ENCODE measurements at regions of chr19 and their contacts with region 1.

Region 1: GRCh38 chr19:10864538-10864899 is 6.8 kb upstream of the CARM1 start:
- DNase-seq: peak; percentile 90
- ATAC-seq: peak; percentile 89
- H3K4me3 Mint-ChIP-seq: no peak overlapping the region
- H3K27ac Mint-ChIP-seq: no peak overlapping the region
- H3K4me1 Mint-ChIP-seq: peaks cover 12% of the 10 kb centered on the region
- H3K27me3 Mint-ChIP-seq: no peaks in the 10 kb centered on the region
- CTCF ChIP-seq: peak; percentile 97

Region 2: GRCh38 chr19:10717356-10718204 is 146.9 kb before region 1 on chr19 and contains the start of gene DNM2:
- CTCF ChIA-PET with region 1: interaction called, 87 read pairs
- POLR2A ChIA-PET with region 1: interaction called, 13 read pairs
- intact Hi-C with region 1: loop called (anchors 5 kb)
- DNase-seq: peak; percentile 98
- ATAC-seq: peak; percentile 91
- H3K4me3 Mint-ChIP-seq: peak within 1 kb of the TSS; percentile 96
- H3K27ac Mint-ChIP-seq: peak within 1 kb of the TSS; percentile 87
- H3K4me1 Mint-ChIP-seq: peaks cover 30% of the 10 kb centered on the region
- H3K27me3 Mint-ChIP-seq: no peaks in the 10 kb centered on the region
- CTCF ChIP-seq: peak; percentile 62
- total RNA-seq, gene DNM2: 151 to 153 TPM

Region 3: DNA sequence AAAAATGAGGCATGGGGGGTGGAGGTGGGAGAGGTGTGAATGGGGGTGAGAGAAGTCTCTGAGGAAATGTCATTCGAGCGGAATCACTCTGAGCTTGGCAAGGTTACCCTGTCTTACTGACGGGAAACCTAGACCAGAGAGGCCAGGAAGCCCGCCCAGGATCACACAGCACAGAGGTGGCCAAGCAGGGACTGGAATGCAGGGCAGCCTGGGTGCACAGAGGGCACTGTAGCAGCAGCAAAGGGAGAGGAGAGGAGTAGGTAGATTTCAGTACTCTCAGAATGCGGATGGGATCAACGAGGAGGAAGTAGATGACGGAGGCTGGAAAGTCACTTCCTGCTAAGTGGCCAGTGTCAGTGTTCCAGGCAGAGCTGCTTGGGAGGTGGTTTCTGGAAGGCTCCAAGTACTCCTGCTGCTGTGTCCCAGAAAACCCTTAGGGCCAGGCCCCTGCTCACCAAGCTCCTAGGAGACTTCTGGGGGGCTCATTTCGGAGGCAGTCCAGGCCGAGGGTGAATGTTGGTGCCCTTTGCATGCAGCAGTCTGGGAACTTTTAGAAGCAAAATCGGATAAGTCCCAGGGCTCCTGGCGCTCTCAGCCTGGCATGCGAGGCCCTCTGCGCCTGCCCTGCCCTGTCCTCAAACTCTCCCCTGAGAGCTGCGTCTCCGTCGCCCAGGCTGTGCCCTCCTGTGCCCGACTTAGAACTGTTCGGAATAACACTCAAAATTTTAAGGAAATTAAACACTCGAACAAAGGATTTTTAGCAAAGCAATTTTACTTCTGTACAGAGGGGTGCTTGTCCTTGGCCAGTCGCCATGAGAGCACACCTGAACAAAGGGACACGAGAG is 113.2 kb before region 1 on chr19:
- CTCF ChIA-PET with region 1: interaction called, 10 read pairs
- POLR2A ChIA-PET with region 1: no interaction called
- intact Hi-C with region 1: no loop called
- DNase-seq: peak; percentile 51
- ATAC-seq: peak; percentile 21
- H3K4me3 Mint-ChIP-seq: peak overlapping the region; percentile 2
- H3K27ac Mint-ChIP-seq: peak overlapping the region; percentile 87
- H3K4me1 Mint-ChIP-seq: peaks cover 79% of the 10 kb centered on the region
- H3K27me3 Mint-ChIP-seq: no peaks in the 10 kb centered on the region
- CTCF ChIP-seq: no peak

Region 4: GRCh38 chr19:10820173-10820572 is 44.3 kb before region 1 on chr19:
- CTCF ChIA-PET with region 1: interaction called, 12 read pairs
- POLR2A ChIA-PET with region 1: no interaction called
- intact Hi-C with region 1: no loop called
- DNase-seq: peak; percentile 24
- ATAC-seq: peak; percentile 64
- H3K4me3 Mint-ChIP-seq: no peak overlapping the region
- H3K27ac Mint-ChIP-seq: peak overlapping the region; percentile 77
- H3K4me1 Mint-ChIP-seq: peaks cover 6% of the 10 kb centered on the region
- H3K27me3 Mint-ChIP-seq: no peaks in the 10 kb centered on the region
- CTCF ChIP-seq: peak; percentile 30

Region 5: GRCh38 chr19:10835754-10836477 is 28.6 kb before region 1 on chr19 and contains the start of gene TMED1:
- CTCF ChIA-PET with region 1: interaction called, 40 read pairs
- POLR2A ChIA-PET with region 1: interaction called, 4 read pairs
- intact Hi-C with region 1: no loop called
- DNase-seq: peak; percentile 100
- ATAC-seq: peak; percentile 92
- H3K4me3 Mint-ChIP-seq: peak within 1 kb of the TSS; percentile 98
- H3K27ac Mint-ChIP-seq: peak within 1 kb of the TSS; percentile 99
- H3K4me1 Mint-ChIP-seq: peaks cover 16% of the 10 kb centered on the region
- H3K27me3 Mint-ChIP-seq: no peaks in the 10 kb centered on the region
- CTCF ChIP-seq: no peak
- total RNA-seq, gene TMED1: 12.9 to 15.0 TPM

Region 6: GRCh38 chr19:10881403-10882107 is 17.0 kb after region 1 on chr19:
- CTCF ChIA-PET with region 1: interaction called, 12 read pairs
- POLR2A ChIA-PET with region 1: interaction called, 4 read pairs
- intact Hi-C with region 1: no loop called
- DNase-seq: no peak
- ATAC-seq: no peak
- H3K4me3 Mint-ChIP-seq: no peak overlapping the region
- H3K27ac Mint-ChIP-seq: no peak overlapping the region
- H3K4me1 Mint-ChIP-seq: peaks cover 30% of the 10 kb centered on the region
- H3K27me3 Mint-ChIP-seq: no peaks in the 10 kb centered on the region
- CTCF ChIP-seq: no peak

Measured in activated CD8-positive, alpha-beta T cell treated with anti-CD3 and anti-CD28 coated beads for 36 hours (primary cell).